Endothelial cell of umbilical vein (primary cell): ENCODE measurements at regions of chr1 and their contacts with region 1.

Region 1: GRCh38 chr1:234772345-234773147 is 162.6 kb upstream of the IRF2BP2 start:
- DNase-seq: peak; percentile 91
- H3K4me3 ChIP-seq: no peak overlapping the region
- H3K27ac ChIP-seq: peak overlapping the region; percentile 89
- H3K4me1 ChIP-seq: peaks cover 12% of the 10 kb centered on the region
- H3K27me3 ChIP-seq: peaks cover 2% of the 10 kb centered on the region in 2 experiments
- CTCF ChIP-seq: no peak
- POLR2A ChIP-seq: peak; percentile 62

Region 2: GRCh38 chr1:234631721-234632125 is 140.8 kb before region 1 on chr1:
- CTCF ChIA-PET with region 1: no interaction called
- POLR2A ChIA-PET with region 1: no interaction called
- dilution Hi-C with region 1: no loop called
- intact Hi-C with region 1: loop called (anchors 1 kb)
- DNase-seq: peak; percentile 98
- H3K4me3 ChIP-seq: no peak overlapping the region
- H3K27ac ChIP-seq: peak overlapping the region; percentile 95
- H3K4me1 ChIP-seq: peaks cover 38% of the 10 kb centered on the region
- H3K27me3 ChIP-seq: no peaks in the 10 kb centered on the region
- CTCF ChIP-seq: no peak
- POLR2A ChIP-seq: no peak

Region 3: GRCh38 chr1:234730770-234731568 is 41.6 kb before region 1 on chr1:
- CTCF ChIA-PET with region 1: no interaction called
- POLR2A ChIA-PET with region 1: no interaction called
- dilution Hi-C with region 1: no loop called
- intact Hi-C with region 1: loop called (anchors 1 kb)
- DNase-seq: no peak
- H3K4me3 ChIP-seq: no peak overlapping the region
- H3K27ac ChIP-seq: no peak overlapping the region
- H3K4me1 ChIP-seq: peaks cover 24% of the 10 kb centered on the region
- H3K27me3 ChIP-seq: no peaks in the 10 kb centered on the region
- CTCF ChIP-seq: no peak
- POLR2A ChIP-seq: no peak

Region 4: DNA sequence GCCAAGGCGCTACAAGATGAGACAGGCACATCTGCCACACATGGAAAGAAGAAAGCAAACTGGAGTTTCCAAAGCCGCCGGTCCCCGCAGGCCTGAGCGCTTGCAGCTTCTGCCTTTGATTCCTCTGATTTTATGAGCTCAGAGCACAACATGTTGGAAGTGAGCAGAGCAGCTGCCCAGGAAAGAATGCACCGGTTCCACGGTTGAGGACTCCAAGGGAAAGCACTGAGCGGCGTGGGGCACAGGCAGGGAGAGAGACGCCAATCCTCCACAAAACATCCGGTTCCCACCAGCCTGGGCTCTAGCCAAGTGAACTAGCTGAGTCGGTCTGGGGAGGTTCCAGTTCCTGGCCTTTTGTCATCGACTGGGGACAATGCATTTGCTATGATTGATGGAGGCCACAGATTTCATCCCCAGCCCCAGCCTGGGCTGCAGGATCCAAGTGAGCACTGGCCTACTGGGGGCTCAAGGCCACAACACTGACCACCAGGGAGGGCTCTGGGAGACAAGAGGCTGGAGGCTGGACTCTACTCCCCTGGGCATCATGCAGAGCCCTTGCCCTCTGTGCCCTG is 90.5 kb after region 1 on chr1:
- CTCF ChIA-PET with region 1: no interaction called
- POLR2A ChIA-PET with region 1: no interaction called
- dilution Hi-C with region 1: no loop called
- intact Hi-C with region 1: loop called (anchors 5 kb)
- DNase-seq: peak; percentile 96
- H3K4me3 ChIP-seq: no peak overlapping the region
- H3K27ac ChIP-seq: peak overlapping the region; percentile 85
- H3K4me1 ChIP-seq: peaks cover 46% of the 10 kb centered on the region
- H3K27me3 ChIP-seq: no peaks in the 10 kb centered on the region
- CTCF ChIP-seq: no peak
- POLR2A ChIP-seq: no peak

Region 5: GRCh38 chr1:234893725-234894630 is 121.4 kb after region 1 on chr1:
- CTCF ChIA-PET with region 1: no interaction called
- POLR2A ChIA-PET with region 1: no interaction called
- dilution Hi-C with region 1: no loop called
- intact Hi-C with region 1: loop called (anchors 2 kb)
- DNase-seq: peak; percentile 98
- H3K4me3 ChIP-seq: no peak overlapping the region
- H3K27ac ChIP-seq: peak overlapping the region; percentile 93
- H3K4me1 ChIP-seq: peaks cover 20% of the 10 kb centered on the region
- H3K27me3 ChIP-seq: no peaks in the 10 kb centered on the region
- CTCF ChIP-seq: no peak
- POLR2A ChIP-seq: no peak

Region 6: GRCh38 chr1:234961456-234962339 is 189.2 kb after region 1 on chr1:
- CTCF ChIA-PET with region 1: no interaction called
- POLR2A ChIA-PET with region 1: no interaction called
- dilution Hi-C with region 1: no loop called
- intact Hi-C with region 1: no loop called
- DNase-seq: peak; percentile 68
- H3K4me3 ChIP-seq: no peak overlapping the region
- H3K27ac ChIP-seq: peak overlapping the region; percentile 59
- H3K4me1 ChIP-seq: peaks cover 40% of the 10 kb centered on the region
- H3K27me3 ChIP-seq: no peaks in the 10 kb centered on the region
- CTCF ChIP-seq: no peak
- POLR2A ChIP-seq: no peak